ENCODE measurements at regions of chr11 and their contacts with region 1.

Region 1: DNA sequence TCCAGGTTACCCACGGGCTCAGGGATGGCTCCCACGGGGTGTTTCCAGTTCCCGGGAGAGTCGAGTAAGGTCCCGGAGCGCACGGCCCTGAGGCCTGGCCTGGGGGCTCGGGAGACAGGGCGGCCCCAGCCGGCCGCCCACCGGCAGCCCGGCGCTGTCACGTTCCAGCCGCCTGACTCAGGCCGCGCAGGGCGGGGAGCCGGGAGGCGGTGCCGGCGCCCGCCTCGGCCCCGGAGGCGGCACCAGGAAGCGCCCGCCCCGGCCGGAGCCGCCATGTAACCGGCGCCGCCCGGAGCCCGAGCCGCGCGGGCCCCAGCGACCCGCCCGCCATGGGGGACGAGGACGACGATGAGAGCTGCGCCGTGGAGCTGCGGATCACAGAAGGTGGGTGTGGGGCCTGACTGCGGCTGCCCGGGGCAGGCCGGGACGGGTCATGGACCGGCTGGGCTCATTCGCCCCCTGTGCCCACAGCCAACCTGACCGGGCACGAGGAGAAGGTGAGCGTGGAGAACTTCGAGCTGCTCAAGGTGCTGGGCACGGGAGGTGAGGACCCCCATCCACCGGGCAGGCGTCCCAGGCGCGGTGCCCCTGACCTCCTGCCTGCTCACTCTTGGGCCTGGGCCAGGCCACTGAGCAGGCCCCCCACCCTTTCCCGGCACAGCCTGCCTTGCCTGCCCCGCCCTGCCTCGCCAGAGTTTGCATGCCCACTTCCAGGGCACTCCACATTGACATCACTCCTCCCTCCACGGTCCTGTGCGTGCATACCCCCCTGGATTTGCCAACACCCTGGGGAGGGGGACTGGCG is at the start of gene RPS6KA4:
- H3K4me3 ChIP-seq: peak within 1 kb of the TSS; percentile 83
- H3K27ac ChIP-seq: peak within 1 kb of the TSS; percentile 75; the same call in 1 of the 2 replicates
- H3K4me1 ChIP-seq: no peaks in the 10 kb centered on the region; the same call in 1 of the 2 replicates
- CTCF ChIP-seq: no peak

Region 2: DNA sequence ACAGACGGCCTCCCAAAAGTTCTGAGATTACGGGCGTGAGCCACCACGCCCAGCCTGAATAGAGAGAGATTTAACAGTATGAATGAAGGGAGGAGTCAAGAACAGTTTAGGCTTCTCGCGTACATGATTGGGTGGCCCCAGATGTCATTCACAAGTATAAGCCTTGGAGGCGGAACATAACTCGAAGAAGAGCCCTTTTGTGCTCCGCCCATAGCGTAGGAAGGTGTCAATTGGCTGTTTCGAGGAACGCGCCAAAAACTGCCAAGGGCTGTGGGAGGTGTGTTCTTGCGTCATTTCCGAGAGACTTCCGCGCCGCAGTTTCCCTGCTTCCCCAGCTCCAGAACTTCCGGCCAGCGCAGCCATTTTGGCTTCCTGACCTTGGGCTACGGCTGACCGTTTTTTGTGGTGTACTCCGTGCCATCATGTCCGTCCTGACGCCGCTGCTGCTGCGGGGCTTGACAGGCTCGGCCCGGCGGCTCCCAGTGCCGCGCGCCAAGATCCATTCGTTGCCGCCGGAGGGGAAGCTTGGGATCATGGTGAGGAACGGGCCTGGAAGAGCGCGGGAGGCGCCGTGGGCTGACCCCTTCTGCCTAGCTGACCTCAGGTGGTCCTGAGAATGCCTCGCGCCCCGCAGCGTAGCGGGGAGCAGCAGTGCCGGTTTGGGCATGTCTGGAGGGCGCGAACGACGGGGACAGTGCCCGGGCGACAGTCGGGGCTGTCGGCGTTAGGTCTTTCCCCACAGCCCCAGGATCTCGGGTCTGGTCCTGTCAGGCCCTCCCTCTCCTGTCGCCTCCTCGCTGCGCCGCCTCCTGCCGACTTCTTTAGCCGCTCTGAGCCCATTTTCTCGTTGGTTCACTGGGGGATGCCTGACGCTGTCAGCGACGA is 384.6 kb before region 1 on chr11 and contains the start of gene COX8A:
- CTCF ChIA-PET with region 1: no interaction called
- POLR2A ChIA-PET with region 1: no interaction called
- H3K4me3 ChIP-seq: peak within 1 kb of the TSS; percentile 96
- H3K27ac ChIP-seq: peak within 1 kb of the TSS; percentile 84
- H3K4me1 ChIP-seq: no peaks in the 10 kb centered on the region
- CTCF ChIP-seq: peak; percentile 28; the same call in 1 of the 2 replicates

Region 3: GRCh38 chr11:64204464-64204989 is 154.6 kb before region 1 on chr11:
- CTCF ChIA-PET with region 1: interaction called, 19 read pairs
- POLR2A ChIA-PET with region 1: no interaction called
- H3K4me3 ChIP-seq: no peak overlapping the region
- H3K27ac ChIP-seq: peak overlapping the region; percentile 55
- H3K4me1 ChIP-seq: 0 out of 2 replicates have a peak, but pooled peaks cover 8% of the 10 kb centered on the region
- CTCF ChIP-seq: peak; percentile 80

Region 4: GRCh38 chr11:64317957-64318693 is 41.0 kb before region 1 on chr11 and contains the start of gene PRDX5:
- CTCF ChIA-PET with region 1: interaction called, 85 read pairs
- POLR2A ChIA-PET with region 1: interaction called, 34 read pairs
- H3K4me3 ChIP-seq: peak within 1 kb of the TSS; percentile 90
- H3K27ac ChIP-seq: peak within 1 kb of the TSS; percentile 88
- H3K4me1 ChIP-seq: no peaks in the 10 kb centered on the region
- CTCF ChIP-seq: peak; percentile 95

Region 5: DNA sequence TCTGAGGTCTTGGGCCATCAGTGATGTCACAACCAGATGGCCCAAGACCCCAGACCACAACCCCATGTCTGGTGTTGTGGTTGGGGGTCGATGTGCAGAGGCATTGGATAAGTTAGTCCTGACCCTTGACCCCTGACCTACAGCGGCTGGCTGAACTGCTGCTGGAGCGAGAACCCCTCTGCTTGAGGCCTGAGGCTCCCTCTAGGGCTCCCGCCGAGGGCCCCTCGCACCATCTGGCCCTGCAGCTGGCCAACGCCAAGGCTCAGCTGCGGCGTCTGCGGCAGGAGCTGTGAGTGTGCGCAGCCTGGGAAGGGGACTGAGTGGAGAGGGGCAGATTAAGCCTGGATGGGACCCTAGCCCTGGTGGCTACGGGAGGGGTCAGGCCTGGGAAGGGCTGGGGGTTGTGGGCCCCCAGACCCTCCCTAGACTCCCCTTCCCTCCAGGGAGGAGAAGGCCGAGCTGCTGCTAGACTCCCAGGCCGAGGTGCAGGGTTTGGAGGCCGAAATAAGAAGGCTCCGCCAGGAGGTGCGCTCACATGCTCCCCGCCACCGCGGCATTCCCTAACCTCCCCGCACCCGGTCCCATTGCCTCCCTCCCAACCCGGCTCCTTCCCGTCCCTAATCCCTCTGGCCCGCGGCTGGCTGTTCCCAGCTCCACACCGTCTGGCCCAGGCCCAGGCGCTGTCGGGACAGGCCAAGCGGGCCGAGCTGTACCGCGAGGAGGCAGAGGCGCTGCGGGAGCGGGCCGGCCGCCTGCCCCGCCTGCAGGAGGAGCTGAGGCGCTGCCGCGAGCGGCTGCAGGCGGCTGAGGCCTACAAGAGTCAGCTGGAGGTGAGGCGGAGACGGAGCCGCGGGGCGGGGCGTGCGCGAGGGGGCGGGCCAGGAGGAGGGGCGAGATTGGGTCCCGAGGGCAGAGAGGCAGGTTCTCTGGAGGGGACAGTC is 17.0 kb before region 1 on chr11:
- CTCF ChIA-PET with region 1: interaction called, 86 read pairs
- POLR2A ChIA-PET with region 1: interaction called, 5 read pairs
- H3K4me3 ChIP-seq: peak overlapping the region; percentile 25
- H3K27ac ChIP-seq: no peak overlapping the region; the same call in 1 of the 2 replicates
- H3K4me1 ChIP-seq: no peaks in the 10 kb centered on the region
- CTCF ChIP-seq: peak; percentile 39; the same call in 1 of the 2 replicates

Region 6: GRCh38 chr11:64652586-64653387 is 293.7 kb after region 1 on chr11:
- CTCF ChIA-PET with region 1: interaction called, 41 read pairs
- POLR2A ChIA-PET with region 1: no interaction called
- H3K4me3 ChIP-seq: no peak overlapping the region
- H3K27ac ChIP-seq: no peak overlapping the region
- H3K4me1 ChIP-seq: no peaks in the 10 kb centered on the region
- CTCF ChIP-seq: peak; percentile 81